Ascending aorta (tissue), 2 donors: ENCODE measurements at regions of chr6 and their contacts with region 1.

Region 1: DNA sequence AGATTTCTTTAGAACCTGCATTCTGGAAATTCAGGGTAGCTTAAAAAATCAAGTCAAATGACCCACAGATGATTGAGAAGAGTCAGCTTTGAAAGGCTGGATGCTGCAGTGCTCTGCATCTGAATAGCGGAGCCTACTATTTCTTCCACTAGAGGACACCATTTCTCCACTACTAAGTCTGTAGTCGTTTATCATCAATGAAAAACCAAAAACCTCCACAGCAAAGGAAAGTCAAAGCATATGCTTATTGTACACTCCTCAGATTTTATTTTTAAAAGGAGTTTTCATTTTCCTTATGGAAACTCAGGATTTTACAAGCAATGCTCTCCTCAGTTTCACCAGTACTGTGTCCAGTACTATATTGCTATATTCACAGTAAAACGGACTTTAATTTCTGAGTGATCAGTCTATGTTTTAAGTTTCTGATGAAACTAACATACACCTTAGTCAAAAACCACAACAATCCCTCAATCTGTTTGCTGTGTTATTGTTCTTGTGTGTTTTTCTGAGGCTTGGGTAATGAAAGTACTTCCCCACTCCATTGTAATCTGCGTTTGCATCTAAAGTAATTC is 50.5 kb upstream of the ENPP5 start:
- DNase-seq: no peak
- H3K4me3 ChIP-seq: no peak overlapping the region
- H3K27ac ChIP-seq: peak overlapping the region in 1 of 2 donors; percentile 97
- H3K4me1 ChIP-seq: peaks cover 9 to 36% of the 10 kb centered on the region in 2 donors
- H3K27me3 ChIP-seq: no peaks in the 10 kb centered on the region
- CTCF ChIP-seq: peak; percentile 70 to 80 (median 71)

Region 2: DNA sequence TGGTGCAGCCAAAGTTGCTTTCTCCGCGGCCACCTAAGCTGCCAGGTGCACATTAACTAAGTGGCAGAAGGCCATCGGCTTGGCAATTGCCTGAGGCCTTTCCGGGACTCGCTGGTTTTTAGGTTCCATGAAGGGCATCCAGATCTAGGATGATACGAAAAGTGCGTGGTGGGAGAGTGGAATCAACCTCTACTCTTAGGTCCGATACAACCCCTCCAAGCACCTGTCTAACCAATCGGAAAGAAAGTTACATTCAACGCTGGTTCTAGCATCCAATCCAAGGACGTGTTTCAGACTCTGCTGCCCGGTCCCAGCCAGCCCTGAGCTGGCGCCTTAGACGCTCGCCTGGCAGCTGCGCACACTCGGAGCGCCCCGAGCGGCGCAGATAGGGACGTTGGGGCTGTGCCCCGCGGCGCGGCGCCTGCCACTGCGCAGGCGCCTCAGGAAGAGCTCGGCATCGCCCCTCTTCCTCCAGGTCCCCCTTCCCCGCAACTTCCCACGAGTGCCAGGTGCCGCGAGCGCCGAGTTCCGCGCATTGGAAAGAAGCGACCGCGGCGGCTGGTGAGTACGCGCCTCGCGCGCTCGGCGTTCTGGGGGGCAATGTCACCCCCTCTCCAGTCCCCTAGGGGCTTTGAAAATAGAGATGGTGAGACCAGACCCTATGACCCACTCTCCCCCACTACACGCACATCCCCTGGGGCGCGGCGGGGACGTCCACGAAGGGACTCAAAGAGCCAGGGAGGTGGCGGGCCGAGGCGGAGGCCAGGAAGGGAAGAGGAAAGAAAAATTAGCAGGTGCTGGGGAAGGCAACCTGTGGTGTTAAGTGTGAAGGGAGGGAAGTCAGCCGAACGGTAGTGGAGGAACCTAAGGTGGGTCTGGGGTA is 91.4 kb before region 1 on chr6 and contains the start of gene ENPP4:
- intact Hi-C with region 1: loop called (anchors 5 kb)
- DNase-seq: peak; percentile 43 to 94
- H3K4me3 ChIP-seq: peak within 1 kb of the TSS; percentile 76 to 94
- H3K27ac ChIP-seq: peak within 1 kb of the TSS; percentile 64 to 82
- H3K4me1 ChIP-seq: peaks cover 0 to 6% of the 10 kb centered on the region in 2 donors
- H3K27me3 ChIP-seq: no peaks in the 10 kb centered on the region
- CTCF ChIP-seq: peak in 2 of 3 experiments; percentile 2 to 16
- total RNA-seq, gene ENPP4: 12.5 TPM

Region 3: DNA sequence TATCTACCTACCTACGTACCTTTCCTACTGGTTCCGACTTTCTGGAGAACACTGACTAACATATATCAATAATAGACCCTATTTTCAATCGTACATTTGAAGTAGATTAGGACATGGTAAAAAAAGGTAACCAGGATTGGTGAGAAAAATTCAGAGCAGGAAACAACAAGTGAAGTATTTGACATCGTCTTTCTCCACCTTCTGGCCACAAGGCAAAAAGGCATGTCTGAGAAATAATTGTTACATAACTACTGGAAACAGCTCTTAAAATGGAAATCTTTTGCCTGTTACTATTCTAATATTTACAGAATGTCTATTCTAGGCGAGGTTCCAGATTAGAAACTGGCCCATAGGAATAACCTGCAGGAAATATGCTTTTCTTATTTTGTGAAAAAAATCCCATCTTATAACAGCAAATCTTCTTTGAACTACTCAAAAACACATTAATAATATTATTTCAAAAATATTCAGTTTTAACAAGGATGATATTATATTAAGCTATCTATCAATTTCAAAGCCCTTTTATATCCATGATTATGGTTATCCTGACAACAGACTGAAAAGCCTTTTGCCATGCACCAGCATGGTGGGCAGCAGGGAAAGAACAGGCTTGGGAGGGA is 189.1 kb after region 1 on chr6:
- intact Hi-C with region 1: loop called (anchors 2 kb)
- DNase-seq: no peak
- H3K4me3 ChIP-seq: no peak overlapping the region
- H3K27ac ChIP-seq: peak overlapping the region; percentile 21 to 30
- H3K4me1 ChIP-seq: peaks cover 6 to 61% of the 10 kb centered on the region in 2 donors
- H3K27me3 ChIP-seq: no peaks in the 10 kb centered on the region
- CTCF ChIP-seq: peak; percentile 41 to 78 (median 71)

Region 4: DNA sequence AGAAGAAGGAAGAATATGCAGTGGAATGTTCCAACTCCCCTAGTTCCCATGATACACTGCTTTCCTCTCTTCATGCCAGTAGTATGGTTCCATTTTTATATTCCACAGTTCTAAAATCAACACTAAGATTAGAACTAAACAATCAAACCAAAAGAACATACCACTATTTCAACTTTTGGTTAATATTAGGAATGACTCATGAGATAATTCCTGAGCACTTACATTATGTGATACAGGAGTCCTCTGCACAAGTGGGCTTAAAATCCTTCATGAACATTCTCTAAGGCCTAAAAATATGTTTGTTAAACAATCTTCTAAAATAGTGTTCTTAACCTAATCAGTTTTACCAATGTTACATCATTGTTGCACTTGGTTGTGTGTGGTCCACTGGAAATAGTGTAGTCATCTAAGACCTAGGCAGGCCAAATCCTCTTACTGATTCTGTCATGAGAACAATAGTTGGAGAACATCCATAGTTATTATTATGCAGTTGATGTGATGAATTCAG is 300.2 kb after region 1 on chr6:
- intact Hi-C with region 1: loop called (anchors 2 kb)
- DNase-seq: peak in 1 of 2 donors; percentile 69
- H3K4me3 ChIP-seq: no peak overlapping the region
- H3K27ac ChIP-seq: peak overlapping the region; percentile 83 to 86
- H3K4me1 ChIP-seq: peaks cover 9 to 41% of the 10 kb centered on the region in 2 donors
- H3K27me3 ChIP-seq: no peaks in the 10 kb centered on the region
- CTCF ChIP-seq: no peak

Region 5: DNA sequence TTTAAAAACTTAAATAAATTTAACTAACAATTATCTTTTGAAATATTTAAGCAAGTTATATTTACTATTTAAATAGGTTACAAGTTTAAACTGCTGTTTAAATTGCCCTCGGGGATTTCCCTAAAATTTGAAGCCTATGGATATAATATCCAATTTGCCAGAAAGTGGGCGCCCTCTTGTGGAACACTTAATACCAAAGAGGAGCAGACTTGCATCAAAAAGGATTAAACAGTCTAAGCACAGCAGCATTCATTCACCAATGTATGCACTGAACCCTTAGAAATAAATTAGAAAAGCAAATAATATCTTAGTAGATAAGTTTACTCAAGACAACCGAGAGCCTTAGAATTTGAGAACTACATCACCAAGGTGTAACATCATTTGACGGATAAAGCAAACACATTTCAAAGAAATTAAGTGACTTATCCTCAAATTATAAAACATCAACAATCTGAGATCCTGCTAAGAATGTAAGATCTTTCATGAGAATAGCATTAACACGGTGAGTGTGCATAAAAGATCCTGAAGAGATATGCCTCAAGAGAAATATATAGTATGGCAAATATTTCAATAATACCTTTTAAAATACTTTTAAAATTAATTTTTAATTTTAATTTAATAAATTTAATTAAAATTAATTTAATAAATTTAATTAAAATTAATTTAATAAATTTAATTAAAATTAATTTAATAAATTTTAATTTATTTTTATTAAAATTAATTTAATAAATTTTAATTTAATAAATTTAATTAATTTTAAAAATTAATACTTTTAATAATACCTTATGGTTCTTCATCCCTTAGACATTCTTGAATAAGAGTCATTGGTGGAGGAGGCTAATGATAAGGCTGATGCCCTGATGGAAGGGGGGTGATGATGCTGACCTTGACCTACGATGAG is 560.4 kb after region 1 on chr6:
- intact Hi-C with region 1: loop called (anchors 2 kb)
- DNase-seq: peak in 1 of 2 donors; percentile 77
- H3K4me3 ChIP-seq: no peak overlapping the region
- H3K27ac ChIP-seq: no peak overlapping the region
- H3K4me1 ChIP-seq: no peaks in the 10 kb centered on the region
- H3K27me3 ChIP-seq: no peaks in the 10 kb centered on the region
- CTCF ChIP-seq: peak in 2 of 3 experiments; percentile 48 to 64